ENCODE measurements at regions of chr17 and their contacts with region 1.

Region 1: DNA sequence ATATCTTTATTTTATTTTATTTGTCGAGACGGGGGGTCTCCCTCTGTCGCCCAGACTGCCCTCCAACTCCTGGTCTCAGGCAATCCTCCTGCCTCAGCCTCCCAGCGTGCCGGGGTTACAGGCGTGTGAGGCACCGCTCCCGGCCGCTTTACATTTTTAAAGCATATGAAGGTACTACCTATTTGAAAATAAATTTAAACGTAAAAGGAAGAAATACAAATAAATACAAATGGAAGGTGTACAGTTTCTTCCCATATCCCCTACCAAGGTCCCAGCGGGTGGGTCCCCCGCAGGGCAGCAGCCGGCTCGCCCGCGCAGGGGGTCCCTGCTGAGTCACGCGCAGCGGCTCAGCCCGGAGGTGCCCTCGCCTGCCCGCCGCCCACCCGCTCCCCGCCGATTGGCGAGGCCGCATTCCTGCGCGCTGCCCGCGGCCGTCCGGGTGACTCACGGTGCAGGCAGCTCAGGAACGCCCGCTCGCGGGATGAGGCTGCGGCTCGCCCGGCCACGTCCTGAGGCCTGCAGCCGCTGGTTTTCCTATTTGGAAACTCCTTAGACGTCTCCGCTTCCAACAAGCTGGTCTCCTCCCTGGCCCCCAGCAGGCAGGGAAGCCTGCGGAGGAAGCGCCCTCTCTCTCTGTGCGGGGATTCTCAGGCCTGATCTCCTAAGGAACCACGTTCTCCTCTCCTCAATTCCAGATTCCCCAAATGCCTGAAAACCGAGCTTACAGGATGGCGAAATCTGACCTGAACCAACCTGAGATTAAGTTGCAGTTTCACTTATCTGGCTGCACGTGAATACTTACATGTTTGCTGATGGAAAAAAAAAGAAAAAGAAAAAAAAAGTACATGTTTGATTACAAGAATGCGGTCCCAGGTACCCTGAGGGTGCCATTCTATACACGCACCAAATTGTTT is 54.9 kb upstream of the MAP3K14 start:
- DNase-seq: peak; percentile 95 to 96
- H3K4me3 ChIP-seq: peak overlapping the region; percentile 35
- H3K4me3 Mint-ChIP-seq: peak overlapping the region; percentile 74
- H3K27ac Mint-ChIP-seq: peak overlapping the region; percentile 96
- H3K4me1 ChIP-seq: peaks cover 39% of the 10 kb centered on the region
- H3K4me1 Mint-ChIP-seq: peaks cover 27% of the 10 kb centered on the region
- H3K27me3 ChIP-seq: no peaks in the 10 kb centered on the region
- H3K27me3 Mint-ChIP-seq: no peaks in the 10 kb centered on the region
- CTCF ChIP-seq: no peak

Region 2: DNA sequence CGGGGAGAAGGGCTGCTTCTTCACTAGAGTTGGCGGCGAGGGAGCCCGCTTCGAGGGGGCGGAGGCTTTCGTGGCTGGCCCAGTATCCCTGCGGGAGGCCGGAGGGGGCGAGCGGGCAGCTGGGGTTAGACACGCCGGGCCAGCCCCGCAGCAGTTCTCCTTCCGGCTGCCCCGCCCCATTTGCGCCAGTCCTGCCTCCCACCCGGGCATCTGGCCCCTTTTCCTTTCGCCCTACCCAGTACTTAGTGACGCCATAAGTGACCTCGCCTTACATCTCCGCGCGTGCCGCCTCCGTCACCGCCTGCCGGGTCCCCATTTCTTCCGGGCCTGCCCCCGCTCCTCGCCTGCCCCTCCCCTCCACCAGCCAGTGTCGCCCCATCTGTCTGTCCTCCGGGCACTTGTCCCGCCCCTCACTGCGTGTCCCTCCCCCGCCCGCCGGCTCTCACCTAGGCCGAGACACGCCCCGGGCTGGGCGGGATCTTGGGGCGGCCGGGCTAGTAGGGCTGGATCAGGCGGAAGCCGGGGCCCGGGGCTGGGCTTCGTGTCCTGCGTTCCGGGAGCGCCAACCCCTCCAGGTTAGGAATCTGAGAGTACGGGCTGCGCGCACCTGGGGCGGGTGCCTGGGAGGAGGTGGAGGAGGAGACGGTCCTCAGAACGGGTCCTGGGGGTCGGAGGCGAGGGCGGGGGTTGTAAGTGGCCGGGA is 124.1 kb before region 1 on chr17:
- CTCF ChIA-PET with region 1: no interaction called
- POLR2A ChIA-PET with region 1: interaction called, 10 read pairs
- intact Hi-C with region 1: no loop called
- DNase-seq: peak; percentile 99
- H3K4me3 ChIP-seq: peak overlapping the region; percentile 63
- H3K4me3 Mint-ChIP-seq: peak overlapping the region; percentile 81
- H3K27ac Mint-ChIP-seq: peak overlapping the region; percentile 92
- H3K4me1 ChIP-seq: peaks cover 11% of the 10 kb centered on the region
- H3K4me1 Mint-ChIP-seq: peaks cover 10% of the 10 kb centered on the region
- H3K27me3 ChIP-seq: no peaks in the 10 kb centered on the region
- H3K27me3 Mint-ChIP-seq: peaks cover 2% of the 10 kb centered on the region
- CTCF ChIP-seq: no peak